ENCODE measurements at regions of chr15 and their contacts with region 1.

Region 1: DNA sequence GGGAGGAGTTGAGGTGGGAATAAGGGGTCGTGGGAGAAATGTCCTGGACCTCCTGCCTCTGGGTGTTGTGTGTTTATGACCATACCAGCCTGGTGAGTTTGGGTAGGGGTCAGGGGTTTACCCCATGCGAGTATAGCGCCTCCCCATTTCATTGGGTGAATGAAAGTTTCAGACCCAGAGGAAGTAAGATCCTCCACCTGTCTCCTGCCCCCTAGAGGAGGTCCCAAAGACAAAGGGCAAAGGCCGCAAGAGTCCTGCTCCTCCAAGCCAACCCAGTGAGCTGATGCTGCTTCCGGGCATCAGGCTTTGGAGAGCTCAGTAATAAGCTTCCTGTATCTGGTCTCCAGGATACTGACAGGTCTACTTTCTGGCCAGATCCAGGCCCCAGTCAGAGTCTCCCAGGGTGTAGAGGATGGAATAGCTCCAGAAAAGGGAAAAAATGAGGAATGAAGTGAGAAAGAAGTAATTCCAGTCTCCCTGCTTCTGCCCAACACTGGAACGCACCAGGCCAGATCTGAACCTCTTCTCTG is 6.4 kb upstream of the TBC1D21 start:
- DNase-seq: no peak
- ATAC-seq: no peak

Region 2: DNA sequence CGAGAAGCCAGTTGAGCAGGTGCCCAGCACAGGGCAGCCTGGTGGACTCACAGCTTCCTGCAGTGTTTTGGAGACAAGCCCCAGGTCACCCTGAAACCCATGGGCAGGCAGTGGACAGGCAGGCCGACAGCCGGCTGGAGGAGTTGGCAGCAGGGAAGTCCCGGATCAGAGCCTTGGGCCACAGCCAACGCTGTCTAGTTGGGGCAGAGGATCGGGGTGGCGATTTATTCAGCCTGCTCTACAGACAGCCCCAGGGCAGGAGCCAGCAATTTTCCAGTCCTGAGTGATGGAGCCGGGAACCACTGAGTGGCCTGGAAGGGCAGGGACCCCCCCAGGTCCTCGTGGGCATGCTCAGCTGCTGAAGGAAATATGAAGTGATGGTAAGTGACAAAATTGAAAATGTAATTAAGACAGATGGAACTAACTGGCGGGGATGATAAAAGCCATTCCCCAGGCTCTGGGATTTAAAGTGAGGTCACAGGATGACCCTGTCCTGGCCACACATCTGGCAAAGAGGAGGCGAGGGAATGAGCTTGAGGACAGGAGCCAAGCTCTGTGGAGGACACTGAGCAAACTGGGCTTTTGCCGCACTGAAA is 28.0 kb before region 1 on chr15:
- intact Hi-C with region 1: no loop called
- DNase-seq: no peak
- ATAC-seq: peak; percentile 30

Region 3: GRCh38 chr15:73888224-73889041 is 21.5 kb after region 1 on chr15:
- intact Hi-C with region 1: loop called (anchors 1 kb)
- DNase-seq: peak; percentile 28
- ATAC-seq: no peak